Right ventricle myocardium superior (tissue), 1 donor: ENCODE measurements at regions of chr1 and their contacts with region 1.

Region 1: DNA sequence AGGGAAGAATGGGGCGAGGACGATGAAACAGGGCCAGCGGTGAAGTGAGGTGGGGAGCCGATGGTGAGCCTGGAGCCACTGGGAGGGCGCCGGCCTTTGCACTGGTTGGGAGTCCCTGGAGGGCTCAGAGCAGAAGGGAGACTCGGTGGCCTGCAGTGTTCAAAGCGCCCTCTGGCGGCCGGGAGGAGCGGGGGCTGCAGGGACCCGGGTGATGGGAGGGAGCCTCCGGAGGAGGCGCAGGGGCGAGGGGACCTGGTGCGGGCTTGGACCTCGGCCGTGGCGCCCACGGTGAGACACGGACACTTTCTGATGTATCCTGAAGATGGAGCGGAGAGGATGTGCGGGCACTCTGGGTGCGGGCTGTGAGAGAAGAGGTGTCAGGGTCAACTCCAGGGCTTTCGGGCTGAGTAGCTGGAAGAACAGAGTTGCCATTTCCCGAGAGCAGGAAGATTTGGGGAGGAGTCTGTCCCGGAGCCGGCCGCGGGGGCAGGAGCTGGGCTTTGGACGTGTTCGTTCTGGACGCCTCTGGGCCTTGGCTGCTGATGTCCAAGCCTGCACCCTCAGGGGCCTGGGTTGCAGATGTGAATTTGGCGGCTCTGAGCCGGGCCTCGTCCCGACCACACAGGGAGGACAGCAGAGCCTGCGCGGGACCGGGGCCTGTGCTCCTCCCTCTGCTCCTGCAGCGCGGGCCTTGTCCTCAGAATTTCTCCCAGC is 29.7 kb downstream of the HEYL start:
- DNase-seq: peak; percentile 89
- ATAC-seq: peak; percentile 86

Region 2: GRCh38 chr1:39717809-39718208 is 108.0 kb after region 1 on chr1:
- intact Hi-C with region 1: loop called (anchors 2 kb)
- DNase-seq: no peak
- ATAC-seq: no peak